ENCODE measurements at regions of chr3 and their contacts with region 1.

Region 1: DNA sequence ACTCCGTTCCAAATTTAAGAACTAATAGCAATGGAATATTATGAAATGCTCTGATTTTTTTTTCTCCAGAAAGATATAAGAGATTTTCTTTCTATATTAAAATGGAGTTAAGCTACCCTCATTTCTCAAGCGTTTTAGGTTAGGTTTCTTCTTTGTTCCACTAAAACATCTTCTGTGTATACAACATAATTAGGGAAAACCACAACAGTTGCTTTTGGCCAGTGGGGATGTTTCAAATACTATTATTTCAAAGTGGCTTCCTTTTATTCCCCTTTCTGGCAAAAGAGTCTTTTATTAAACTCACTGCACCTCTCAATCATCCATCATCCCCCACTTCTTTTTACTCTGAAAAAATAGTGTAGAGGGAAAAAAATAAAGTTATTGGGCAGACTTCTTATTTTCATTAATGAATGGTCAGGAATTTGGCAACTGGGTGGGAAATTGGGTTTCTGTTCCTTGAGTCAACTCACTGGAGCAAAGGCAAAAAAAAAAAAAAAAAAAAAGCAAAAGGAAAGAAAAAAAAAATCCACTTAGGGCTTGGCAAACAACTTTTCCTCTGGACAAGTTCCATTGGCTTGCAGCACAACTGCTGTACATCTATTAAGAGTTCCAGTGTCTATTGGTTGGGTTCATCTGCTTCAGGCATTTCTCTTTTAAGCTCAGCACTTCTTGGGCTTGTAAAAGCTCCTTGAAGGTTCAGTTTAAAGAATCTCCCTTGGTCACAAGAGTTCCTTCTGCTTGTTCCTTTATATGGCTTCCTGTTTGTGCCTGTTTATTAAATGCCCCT is 963.4 kb downstream of the ROBO1 start:
- DNase-seq: peak in 1 of 2 donors; percentile 25
- ATAC-seq: peak in 4 of 8 donors; percentile 29 to 67 (median 55)
- H3K4me3 ChIP-seq: no peak overlapping the region
- H3K27ac ChIP-seq: peak overlapping the region in 1 of 10 donors; percentile 10
- H3K4me1 ChIP-seq: peaks cover 0 to 14% (median 0%) of the 10 kb centered on the region in 9 donors
- H3K27me3 ChIP-seq: no peaks in the 10 kb centered on the region
- CTCF ChIP-seq: no peak

Region 2: DNA sequence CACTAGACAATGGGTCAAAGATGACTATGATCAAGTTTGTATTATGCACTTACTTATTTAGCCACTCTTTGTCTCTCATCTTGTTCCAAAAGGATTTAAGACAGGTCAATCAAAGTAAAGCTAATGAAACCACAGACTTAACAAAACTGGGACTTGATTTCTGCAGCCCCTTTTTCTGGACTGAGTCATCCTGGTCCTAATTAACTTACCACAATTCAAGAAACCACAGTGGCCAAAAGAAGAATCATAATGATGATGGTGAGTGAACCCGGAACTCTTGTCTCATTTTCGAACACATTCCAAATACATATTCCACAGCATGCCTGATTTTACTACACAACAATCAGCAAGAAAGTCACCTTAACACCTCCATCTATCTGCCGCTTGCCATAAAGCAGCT is 369.6 kb before region 1 on chr3:
- intact Hi-C with region 1: no loop called
- DNase-seq: no peak
- ATAC-seq: no peak
- H3K4me3 ChIP-seq: no peak overlapping the region
- H3K27ac ChIP-seq: no peak overlapping the region
- H3K4me1 ChIP-seq: no peaks in the 10 kb centered on the region
- H3K27me3 ChIP-seq: no peaks in the 10 kb centered on the region
- CTCF ChIP-seq: no peak

Region 3: GRCh38 chr3:78781351-78781750 is 23.1 kb before region 1 on chr3:
- intact Hi-C with region 1: loop called in 1 of 10 experiments (anchors 1 kb)
- DNase-seq: no peak
- ATAC-seq: no peak
- H3K4me3 ChIP-seq: no peak overlapping the region
- H3K27ac ChIP-seq: no peak overlapping the region
- H3K4me1 ChIP-seq: no peaks in the 10 kb centered on the region
- H3K27me3 ChIP-seq: no peaks in the 10 kb centered on the region
- CTCF ChIP-seq: no peak